Common myeloid progenitor, CD34-positive (primary cell): ENCODE measurements at regions of chr11 and their contacts with region 1.

Region 1: GRCh38 chr11:114262681-114263512 is 33.3 kb upstream of the NNMT start:
- DNase-seq: peak; percentile 53 to 80 (median 78)
- H3K4me3 ChIP-seq: no peak overlapping the region
- H3K27ac ChIP-seq: no peak overlapping the region
- H3K4me1 ChIP-seq: peaks cover 0 to 23% (median 22%) of the 10 kb centered on the region in 4 experiments
- H3K27me3 ChIP-seq: peaks cover 0 to 11% (median 11%) of the 10 kb centered on the region in 5 experiments

Region 2: GRCh38 chr11:113906038-113906437 is 356.9 kb before region 1 on chr11:
- CTCF ChIA-PET with region 1: interaction called, 55 read pairs
- POLR2A ChIA-PET with region 1: no interaction called
- DNase-seq: peak in 2 of 3 donors; percentile 10 to 12
- H3K4me3 ChIP-seq: no peak overlapping the region
- H3K27ac ChIP-seq: no peak overlapping the region
- H3K4me1 ChIP-seq: no peaks in the 10 kb centered on the region
- H3K27me3 ChIP-seq: peaks cover 2 to 8% (median 5%) of the 10 kb centered on the region in 5 experiments

Region 3: GRCh38 chr11:114026355-114026754 is 236.5 kb before region 1 on chr11:
- CTCF ChIA-PET with region 1: interaction called, 168 read pairs
- POLR2A ChIA-PET with region 1: no interaction called
- DNase-seq: peak; percentile 76 to 87 (median 87)
- H3K4me3 ChIP-seq: no peak overlapping the region
- H3K27ac ChIP-seq: no peak overlapping the region
- H3K4me1 ChIP-seq: no peaks in the 10 kb centered on the region
- H3K27me3 ChIP-seq: peaks cover 0 to 10% (median 0%) of the 10 kb centered on the region in 5 experiments

Region 4: GRCh38 chr11:114059278-114059983 is 203.5 kb before region 1 on chr11 and contains the start of gene ZBTB16:
- CTCF ChIA-PET with region 1: interaction called, 57 read pairs
- POLR2A ChIA-PET with region 1: interaction called, 4 read pairs
- DNase-seq: peak; percentile 89 to 95 (median 91)
- H3K4me3 ChIP-seq: peak within 1 kb of the TSS; percentile 72 to 95 (median 90)
- H3K27ac ChIP-seq: peak within 1 kb of the TSS; percentile 61 to 78
- H3K4me1 ChIP-seq: peaks cover 2 to 50% (median 41%) of the 10 kb centered on the region in 4 experiments
- H3K27me3 ChIP-seq: peaks cover 0 to 19% (median 2%) of the 10 kb centered on the region in 5 experiments

Region 5: DNA sequence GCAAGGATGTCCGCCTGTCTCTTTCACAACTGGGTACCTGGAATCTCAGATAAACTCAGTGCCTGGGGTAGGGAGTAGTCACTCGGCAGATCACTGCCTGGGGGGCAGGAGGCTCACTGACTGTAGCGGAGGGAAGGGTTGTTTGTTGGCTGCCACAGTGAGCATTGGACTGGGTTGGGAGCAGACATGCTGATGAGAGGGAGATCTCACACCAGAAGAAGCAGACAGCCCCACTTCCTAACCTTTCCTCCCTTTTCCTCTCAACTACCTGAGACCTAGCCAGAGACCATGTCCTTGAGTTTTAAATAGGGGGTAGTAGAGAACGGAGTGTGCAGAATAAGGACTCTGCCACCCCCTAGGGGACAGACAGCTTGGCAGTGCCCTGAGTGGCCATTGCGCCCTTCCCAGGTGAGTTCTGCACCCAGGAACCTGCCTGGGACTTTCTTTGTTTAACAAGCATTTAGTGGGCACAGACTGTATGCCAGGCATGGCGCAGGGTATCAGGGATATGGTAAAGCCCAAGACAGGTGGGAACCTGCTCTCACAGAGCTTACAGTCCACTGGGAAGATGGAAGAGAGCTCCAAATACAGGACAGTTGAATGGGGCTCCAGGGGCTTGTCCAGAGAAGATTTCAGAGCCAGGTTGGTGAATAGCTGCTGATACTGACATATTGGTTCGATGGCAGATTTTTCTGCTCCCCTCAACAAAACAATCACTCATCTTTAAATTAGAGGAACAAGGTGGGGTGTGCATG is 82.4 kb before region 1 on chr11:
- CTCF ChIA-PET with region 1: interaction called, 91 read pairs
- POLR2A ChIA-PET with region 1: no interaction called
- DNase-seq: peak; percentile 50 to 71 (median 67)
- H3K4me3 ChIP-seq: no peak overlapping the region
- H3K27ac ChIP-seq: no peak overlapping the region
- H3K4me1 ChIP-seq: peaks cover 13 to 36% (median 21%) of the 10 kb centered on the region in 4 experiments
- H3K27me3 ChIP-seq: no peaks in the 10 kb centered on the region

Region 6: DNA sequence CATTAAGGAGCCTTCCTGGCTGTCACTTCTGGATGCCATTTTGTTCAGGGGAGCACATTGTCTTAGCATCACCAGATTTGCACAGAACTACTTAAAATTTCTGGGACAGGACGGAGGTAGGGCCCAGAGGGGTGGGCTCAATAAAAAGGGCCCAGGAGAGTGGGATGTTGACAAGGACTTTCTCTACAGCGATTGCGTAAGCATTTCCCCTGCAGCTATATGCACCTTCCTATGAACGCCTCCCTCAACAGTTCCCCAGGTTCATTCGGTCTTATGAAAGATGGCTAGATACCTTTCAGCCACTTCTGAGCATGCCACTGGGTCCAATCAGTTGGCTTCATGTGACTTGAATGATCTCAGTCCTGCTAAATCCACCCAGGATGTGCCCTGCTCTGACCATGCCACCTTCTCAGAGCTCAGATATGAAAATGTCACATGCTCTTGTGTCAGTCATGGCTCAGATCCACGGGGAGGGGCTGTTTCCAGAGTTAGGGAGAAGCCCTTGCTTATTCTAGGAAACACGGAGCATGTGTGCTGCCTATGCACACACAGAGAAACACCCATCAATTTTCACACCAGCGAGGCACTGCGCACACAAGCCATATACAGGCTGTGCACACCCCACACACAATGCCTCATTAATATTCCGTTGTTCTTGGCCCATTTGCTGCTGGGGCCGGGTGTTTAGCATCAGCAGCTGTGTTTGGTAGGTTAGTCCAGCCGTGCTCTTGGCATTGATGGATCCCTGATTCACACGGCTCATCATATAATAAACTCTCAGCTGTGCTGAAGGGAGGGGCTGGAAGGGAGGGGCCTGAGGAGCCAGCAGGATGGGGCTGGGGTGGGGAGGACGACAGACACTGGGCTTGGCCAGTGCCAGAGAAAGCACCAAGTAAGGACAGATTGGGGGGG is 19.2 kb before region 1 on chr11:
- CTCF ChIA-PET with region 1: interaction called, 88 read pairs
- POLR2A ChIA-PET with region 1: no interaction called
- DNase-seq: no peak
- H3K4me3 ChIP-seq: no peak overlapping the region
- H3K27ac ChIP-seq: no peak overlapping the region
- H3K4me1 ChIP-seq: peaks cover 0 to 4% (median 0%) of the 10 kb centered on the region in 4 experiments
- H3K27me3 ChIP-seq: no peaks in the 10 kb centered on the region

Region 7: DNA sequence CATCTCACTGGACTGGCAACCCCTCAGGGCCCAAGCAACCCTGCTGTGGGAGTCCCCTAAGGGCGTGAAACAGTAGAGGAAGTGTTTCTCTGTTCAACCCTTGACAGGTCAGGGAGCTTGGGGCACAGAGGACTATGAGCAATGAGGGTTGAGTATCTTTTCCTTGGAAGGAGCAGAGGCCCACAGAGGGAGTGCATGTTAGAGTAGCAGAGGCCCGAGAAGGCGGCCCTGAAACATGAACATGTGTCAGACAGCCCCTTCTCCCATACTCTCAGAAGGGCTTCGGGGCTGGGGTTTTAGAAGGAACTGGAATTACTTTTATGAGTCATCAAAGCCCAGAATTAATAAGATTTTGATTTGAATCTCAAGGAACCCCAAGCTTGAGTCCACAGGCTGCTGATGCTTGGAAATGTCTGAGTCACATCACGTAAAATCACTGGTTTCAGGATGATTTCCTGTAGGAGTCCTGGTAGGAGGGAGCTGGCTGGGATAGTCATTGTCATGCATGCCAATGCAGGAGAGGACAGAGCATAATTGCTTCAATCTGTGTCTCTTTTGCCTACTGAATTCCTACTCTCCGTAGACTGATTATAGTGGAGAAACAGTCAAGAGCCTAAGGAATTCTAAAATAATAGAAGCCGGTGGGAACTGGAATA is 114.8 kb after region 1 on chr11:
- CTCF ChIA-PET with region 1: no interaction called
- POLR2A ChIA-PET with region 1: no interaction called
- DNase-seq: no peak
- H3K4me3 ChIP-seq: no peak overlapping the region
- H3K27ac ChIP-seq: no peak overlapping the region
- H3K4me1 ChIP-seq: no peaks in the 10 kb centered on the region
- H3K27me3 ChIP-seq: peaks cover 0 to 25% (median 2%) of the 10 kb centered on the region in 5 experiments